Activated CD4-positive, alpha-beta T cell treated with anti-CD3 and anti-CD28 coated beads, Interleukin-2, amount 10 ng/mL, durations not matched to agents 24 days and 14 days (primary cell): ENCODE measurements at regions of chr19 and their contacts with region 1.

Region 1: GRCh38 chr19:29467824-29468401 is 57.9 kb upstream of the VSTM2B start:
- DNase-seq: peak; percentile 76
- H3K4me3 Mint-ChIP-seq: no peak overlapping the region
- H3K27ac Mint-ChIP-seq: no peak overlapping the region
- H3K4me1 Mint-ChIP-seq: no peaks in the 10 kb centered on the region
- H3K27me3 Mint-ChIP-seq: peaks cover 28% of the 10 kb centered on the region

Region 2: DNA sequence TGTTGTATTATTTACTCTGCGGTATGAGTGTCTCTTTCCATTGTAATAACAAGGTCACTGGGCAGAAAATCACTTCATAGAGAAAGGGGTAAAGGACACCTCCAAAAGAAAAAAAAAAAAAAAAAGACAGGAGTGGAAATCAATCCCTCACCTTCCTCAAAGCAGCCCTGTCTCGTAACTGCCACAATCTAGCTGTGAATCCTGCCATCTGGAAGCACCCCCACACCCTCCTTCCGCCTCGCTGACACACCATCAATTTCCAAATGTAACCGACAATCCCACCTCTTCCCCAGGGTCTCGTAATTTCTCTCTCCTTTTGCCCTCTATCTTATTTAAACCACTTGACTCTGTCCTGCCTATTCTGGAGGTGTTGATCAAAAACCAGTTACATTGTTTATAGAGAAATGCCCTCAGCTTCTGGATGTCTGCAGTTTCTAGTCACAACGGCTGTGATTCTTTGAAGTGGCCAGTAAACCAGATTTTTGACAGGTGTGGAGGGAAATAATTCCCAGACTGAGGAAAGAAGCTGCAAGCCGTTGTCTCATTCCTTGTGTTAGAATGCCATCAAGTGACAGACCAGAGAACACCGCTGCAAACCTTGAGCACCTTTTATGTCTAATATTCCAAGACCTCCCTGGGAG is 129.1 kb after region 1 on chr19:
- intact Hi-C with region 1: loop called (anchors 5 kb)
- DNase-seq: no peak
- H3K4me3 Mint-ChIP-seq: no peak overlapping the region
- H3K27ac Mint-ChIP-seq: no peak overlapping the region
- H3K4me1 Mint-ChIP-seq: peaks cover 2% of the 10 kb centered on the region
- H3K27me3 Mint-ChIP-seq: peaks cover 38% of the 10 kb centered on the region